Activated T-helper 2 cell treated with anti-CD3 and anti-CD28 coated beads, Interferon-gamma antibody, Interleukin-2, Interleukin-4, amounts not matched to agents 10 μg/mL and 5 μg/mL and 100 μg/mL, durations not matched to agents 14 hours and 24 hours and 36 hours (primary cell): ENCODE measurements at regions of chr4 and their contacts with region 1.

Region 1: GRCh38 chr4:83356899-83357661 is 22.4 kb upstream of the HPSE start:
- DNase-seq: no peak
- H3K4me3 Mint-ChIP-seq: no peak overlapping the region
- H3K27ac Mint-ChIP-seq: peak overlapping the region; percentile 85
- H3K4me1 Mint-ChIP-seq: peaks cover 24% of the 10 kb centered on the region
- H3K27me3 Mint-ChIP-seq: no peaks in the 10 kb centered on the region

Region 2: GRCh38 chr4:82500106-82500965 is 856.7 kb before region 1 on chr4:
- intact Hi-C with region 1: no loop called
- DNase-seq: no peak
- H3K4me3 Mint-ChIP-seq: no peak overlapping the region
- H3K27ac Mint-ChIP-seq: no peak overlapping the region
- H3K4me1 Mint-ChIP-seq: no peaks in the 10 kb centered on the region
- H3K27me3 Mint-ChIP-seq: no peaks in the 10 kb centered on the region

Region 3: DNA sequence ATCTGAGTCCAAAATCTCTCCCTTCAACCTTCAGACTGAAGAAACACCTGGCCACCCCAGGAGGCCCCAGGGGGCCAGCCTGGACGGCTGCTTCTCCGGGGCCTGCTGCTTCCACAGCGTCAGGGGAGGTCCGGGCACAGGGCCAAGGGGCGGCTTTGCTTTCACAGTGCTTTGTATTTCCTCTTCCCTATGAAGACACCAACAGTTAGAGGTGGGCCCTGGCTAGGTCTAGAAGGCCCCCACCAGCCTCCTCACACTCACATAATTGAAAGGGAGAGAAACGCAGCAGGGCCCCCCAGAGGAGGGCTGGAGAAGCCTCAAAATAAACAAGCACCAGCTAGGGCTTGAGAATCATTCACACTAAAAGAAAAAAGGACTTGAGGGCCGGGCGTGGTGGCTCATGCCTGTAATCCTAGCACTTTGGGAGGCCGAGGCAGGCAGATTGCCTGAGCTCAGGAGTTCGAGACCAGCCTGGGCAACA is 576.3 kb before region 1 on chr4:
- intact Hi-C with region 1: no loop called
- DNase-seq: no peak
- H3K4me3 Mint-ChIP-seq: no peak overlapping the region
- H3K27ac Mint-ChIP-seq: no peak overlapping the region
- H3K4me1 Mint-ChIP-seq: no peaks in the 10 kb centered on the region
- H3K27me3 Mint-ChIP-seq: peaks cover 12% of the 10 kb centered on the region

Region 4: DNA sequence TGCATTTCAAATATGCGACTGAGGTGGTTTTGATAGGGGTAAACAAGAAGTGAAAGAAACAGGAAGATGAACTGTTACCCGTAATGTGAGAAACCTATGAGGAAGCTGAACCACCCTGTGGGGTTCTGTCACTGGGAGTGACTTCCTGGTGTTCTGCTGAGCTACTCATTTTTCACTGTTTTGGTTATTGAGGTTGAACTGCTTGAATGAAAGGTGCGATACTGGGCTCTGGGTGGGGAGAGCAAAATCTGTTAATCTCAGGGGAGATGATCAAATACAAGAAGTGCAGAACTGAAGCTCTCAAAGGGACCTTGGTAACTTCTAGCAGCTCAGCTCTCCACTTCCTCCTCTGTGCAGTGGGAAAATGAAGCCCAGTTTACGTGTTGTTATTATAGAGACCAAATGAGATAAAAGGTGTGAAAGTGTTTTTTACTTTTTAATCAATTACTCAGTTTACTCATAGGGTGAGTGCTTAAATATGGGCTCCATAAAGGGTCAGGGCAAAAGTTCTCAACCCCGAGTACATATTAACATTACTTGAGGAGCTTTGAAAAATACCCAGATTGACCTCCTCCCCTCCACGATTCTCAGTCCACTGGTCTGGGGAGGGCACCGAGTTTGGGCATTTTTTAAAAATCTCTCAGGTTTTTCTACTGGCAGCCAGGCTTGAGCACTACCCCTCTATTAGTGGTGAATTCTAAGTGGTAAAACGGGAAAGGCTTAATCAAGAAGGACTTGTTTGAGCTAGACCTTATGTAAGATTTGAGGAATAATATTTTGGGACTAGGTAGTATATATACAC is 139.2 kb before region 1 on chr4:
- intact Hi-C with region 1: loop called (anchors 1 kb)
- DNase-seq: peak; percentile 74
- H3K4me3 Mint-ChIP-seq: peak overlapping the region; percentile 56
- H3K27ac Mint-ChIP-seq: peak overlapping the region; percentile 84
- H3K4me1 Mint-ChIP-seq: peaks cover 64% of the 10 kb centered on the region
- H3K27me3 Mint-ChIP-seq: peaks cover 13% of the 10 kb centered on the region

Region 5: GRCh38 chr4:83252782-83253405 is 104.2 kb before region 1 on chr4:
- intact Hi-C with region 1: no loop called
- DNase-seq: peak; percentile 66
- H3K4me3 Mint-ChIP-seq: no peak overlapping the region
- H3K27ac Mint-ChIP-seq: no peak overlapping the region
- H3K4me1 Mint-ChIP-seq: peaks cover 12% of the 10 kb centered on the region
- H3K27me3 Mint-ChIP-seq: peaks cover 9% of the 10 kb centered on the region

Region 6: GRCh38 chr4:83276299-83277040 is 80.6 kb before region 1 on chr4:
- intact Hi-C with region 1: loop called (anchors 1 kb)
- DNase-seq: no peak
- H3K4me3 Mint-ChIP-seq: no peak overlapping the region
- H3K27ac Mint-ChIP-seq: peak overlapping the region; percentile 21
- H3K4me1 Mint-ChIP-seq: peaks cover 42% of the 10 kb centered on the region
- H3K27me3 Mint-ChIP-seq: peaks cover 3% of the 10 kb centered on the region

Region 7: DNA sequence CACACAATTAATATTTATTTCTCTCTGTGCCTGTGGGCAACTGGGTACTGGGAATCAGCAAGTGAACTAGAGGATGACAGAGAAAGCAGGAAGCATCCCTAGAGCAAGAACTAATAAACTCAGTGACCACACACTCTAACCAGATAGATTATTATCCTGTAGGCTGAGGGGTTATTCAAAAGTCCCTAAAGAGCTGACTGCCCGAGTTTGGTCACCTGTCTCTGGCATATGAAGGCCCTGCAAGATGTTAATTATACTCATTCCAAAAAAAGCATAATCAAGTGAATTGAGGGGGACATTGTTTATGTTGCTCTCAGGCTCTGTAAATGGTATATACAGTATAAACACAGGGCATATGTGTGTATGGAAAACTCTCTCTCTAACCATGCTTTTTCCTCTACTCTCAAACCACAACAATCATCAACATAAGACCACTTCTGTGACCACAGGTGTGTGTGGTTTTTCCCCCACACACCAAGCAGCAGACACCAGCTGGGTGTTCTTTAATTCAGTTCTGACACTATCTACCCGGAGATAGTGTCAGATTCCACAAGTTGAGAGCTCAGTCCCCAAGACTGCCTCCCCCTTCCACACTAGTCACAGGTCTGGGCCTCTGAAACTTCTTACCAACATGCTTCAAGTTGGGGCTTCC is 16.3 kb before region 1 on chr4:
- intact Hi-C with region 1: loop called (anchors 1 kb)
- DNase-seq: peak; percentile 47
- H3K4me3 Mint-ChIP-seq: no peak overlapping the region
- H3K27ac Mint-ChIP-seq: peak overlapping the region; percentile 66
- H3K4me1 Mint-ChIP-seq: peaks cover 27% of the 10 kb centered on the region
- H3K27me3 Mint-ChIP-seq: peaks cover 17% of the 10 kb centered on the region